Ascending aorta (tissue), 2 donors: ENCODE measurements at regions of chr2 and their contacts with region 1.

Region 1: DNA sequence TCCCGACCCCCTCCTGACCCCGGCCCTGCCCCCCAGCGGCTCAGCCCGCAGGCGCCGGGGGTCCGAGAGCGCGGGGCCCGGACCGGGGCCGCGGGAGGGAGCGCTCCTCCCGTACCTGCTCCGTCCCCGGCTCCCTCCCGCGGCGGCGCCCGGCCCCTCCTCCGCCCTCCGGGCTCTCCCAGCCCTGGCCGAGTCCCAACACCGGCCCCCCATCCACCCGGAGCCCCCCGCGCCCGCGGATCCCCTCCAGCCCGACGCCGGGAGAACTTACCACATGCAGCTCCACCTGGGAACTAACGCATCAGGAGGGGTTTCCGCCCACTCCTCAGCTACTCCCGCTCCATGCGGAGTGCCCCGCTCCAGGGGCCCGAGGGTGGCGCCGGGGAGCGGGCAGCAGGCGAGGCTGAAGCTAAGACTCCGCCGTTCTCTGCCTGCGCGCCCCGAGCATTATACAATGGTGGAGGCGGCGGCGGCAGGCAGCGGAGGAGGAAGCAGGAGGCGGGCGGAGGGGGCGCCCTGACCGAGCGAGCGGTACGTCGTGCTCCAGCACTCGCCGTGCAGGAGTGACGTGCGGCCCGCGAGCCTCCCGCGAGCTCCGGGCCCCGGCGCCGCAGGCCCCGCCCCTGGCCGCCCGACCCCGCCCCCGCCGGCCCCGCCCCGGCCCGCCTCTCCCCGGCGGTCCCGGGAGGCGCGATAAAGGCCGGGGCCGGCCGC is at the start of gene SERTAD2:
- DNase-seq: peak; percentile 49 to 94
- H3K4me3 ChIP-seq: peak within 1 kb of the TSS; percentile 95 to 98
- H3K27ac ChIP-seq: peak within 1 kb of the TSS; percentile 99
- H3K4me1 ChIP-seq: peaks cover 0 to 21% of the 10 kb centered on the region in 2 donors
- H3K27me3 ChIP-seq: no peaks in the 10 kb centered on the region
- CTCF ChIP-seq: no peak
- total RNA-seq, gene SERTAD2: 8.7 TPM

Region 2: GRCh38 chr2:64767670-64768468 is 114.4 kb after region 1 on chr2:
- intact Hi-C with region 1: loop called (anchors 1 kb)
- DNase-seq: peak; percentile 63 to 95
- H3K4me3 ChIP-seq: peak overlapping the region; percentile 72 to 79
- H3K27ac ChIP-seq: peak overlapping the region; percentile 97
- H3K4me1 ChIP-seq: peaks cover 0 to 2% of the 10 kb centered on the region in 2 donors
- H3K27me3 ChIP-seq: no peaks in the 10 kb centered on the region
- CTCF ChIP-seq: peak in 1 of 3 experiments; percentile 6

Region 3: DNA sequence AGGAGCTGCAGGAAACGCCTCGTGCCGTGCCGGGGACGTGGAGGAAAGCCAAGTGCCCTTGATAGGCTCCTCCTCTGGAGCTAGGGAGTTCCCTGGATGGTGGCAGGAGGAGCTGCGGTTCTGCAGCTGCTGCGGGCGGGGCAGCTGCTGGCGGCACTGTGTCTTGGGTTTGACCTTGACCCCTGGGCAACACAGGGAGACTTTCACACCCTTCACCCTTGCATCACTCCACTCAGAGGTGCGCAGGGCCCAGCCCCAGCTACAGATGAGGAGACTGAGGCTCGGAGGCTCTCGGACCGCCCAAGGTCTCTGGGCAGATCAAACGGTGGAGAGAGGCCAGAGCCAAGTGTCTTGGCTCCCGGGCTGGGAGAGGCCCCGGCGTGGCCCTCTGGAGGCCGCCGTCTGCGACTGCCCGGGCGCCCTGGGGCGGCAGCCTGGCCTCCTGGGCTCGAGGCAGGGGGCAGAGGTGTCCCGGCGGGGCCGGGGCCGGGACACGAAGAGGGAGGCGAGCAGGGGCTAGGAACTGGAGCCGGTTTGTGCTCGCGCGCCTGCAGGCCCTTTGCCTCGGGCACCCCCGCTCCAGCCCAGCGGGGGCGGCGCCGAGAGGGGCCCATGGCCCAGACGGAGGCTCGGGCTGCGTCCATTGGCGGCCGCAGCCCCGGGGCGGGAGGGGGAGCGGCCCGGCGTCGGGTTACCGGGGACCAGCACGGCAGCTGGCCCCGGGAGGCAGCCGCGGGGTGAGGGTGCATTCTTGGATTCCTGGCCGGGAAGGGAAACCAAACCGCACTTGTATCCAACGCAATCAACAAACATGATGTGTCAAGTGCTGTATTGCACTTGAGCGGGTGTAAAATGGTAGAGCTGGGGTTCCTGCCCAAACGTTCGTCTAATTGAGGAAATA is 206.1 kb after region 1 on chr2:
- intact Hi-C with region 1: loop called (anchors 2 kb)
- DNase-seq: peak; percentile 59 to 93
- H3K4me3 ChIP-seq: peak overlapping the region; percentile 50 to 74
- H3K27ac ChIP-seq: peak overlapping the region; percentile 93 to 94
- H3K4me1 ChIP-seq: peaks cover 15 to 33% of the 10 kb centered on the region in 2 donors
- H3K27me3 ChIP-seq: no peaks in the 10 kb centered on the region
- CTCF ChIP-seq: no peak